Dendritic cell treated with granulocyte-macrophage colony-stimulating factor and Interleukin-4, amounts not matched to agents 40 ng/mL and 50 ng/mL, for 4 days (primary cell): ENCODE measurements at regions of chr17 and their contacts with region 1.

Region 1: DNA sequence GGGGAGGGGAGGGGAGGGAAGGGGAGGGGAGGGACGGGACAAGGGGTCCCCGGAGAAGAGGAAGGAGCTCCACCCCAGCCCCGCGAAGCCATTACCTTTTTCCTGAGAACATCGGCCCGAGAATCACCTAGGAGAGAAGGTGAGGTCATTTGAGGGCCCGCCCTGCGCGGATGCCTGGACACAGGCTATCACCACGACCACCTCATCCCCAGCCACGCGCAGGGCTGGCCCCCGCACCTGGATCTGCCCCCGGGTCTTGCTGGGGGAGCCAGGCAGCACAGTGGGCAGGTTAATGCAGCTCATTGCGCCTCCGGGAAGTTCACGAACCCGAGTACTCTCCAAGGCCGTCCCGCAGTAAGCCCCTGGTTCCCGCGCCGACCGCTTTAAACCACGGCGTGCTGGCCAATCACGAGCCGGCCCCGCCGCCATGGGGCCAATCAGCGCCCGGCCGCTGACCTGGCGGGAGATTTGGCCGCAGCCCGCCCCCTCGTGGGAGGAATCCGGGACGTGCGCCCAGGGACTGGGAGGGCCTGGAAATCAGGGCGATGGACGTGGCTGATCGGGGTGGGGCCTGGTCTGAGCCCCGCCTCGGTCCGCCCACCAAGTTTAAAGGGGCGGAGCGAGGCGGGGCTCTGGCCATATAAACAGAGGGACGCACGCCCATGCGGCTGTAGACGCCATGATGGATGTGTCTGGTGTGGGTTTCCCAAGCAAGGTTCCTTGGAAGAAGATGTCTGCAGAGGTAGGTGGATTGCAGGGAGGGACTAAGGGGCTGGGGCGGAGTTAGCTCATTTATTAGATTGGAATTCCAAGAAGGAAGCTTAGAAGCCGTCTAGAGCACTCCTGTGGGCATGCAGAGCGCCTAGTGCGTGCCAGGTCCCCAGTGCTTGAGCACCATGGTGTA is at the starts of genes AFMID and TK1:
- H3K4me3 Mint-ChIP-seq: peak within 1 kb of the TSS; percentile 73
- H3K27ac Mint-ChIP-seq: peak within 1 kb of the TSS; percentile 78
- H3K4me1 Mint-ChIP-seq: peaks cover 51% of the 10 kb centered on the region
- H3K27me3 Mint-ChIP-seq: no peaks in the 10 kb centered on the region

Region 2: DNA sequence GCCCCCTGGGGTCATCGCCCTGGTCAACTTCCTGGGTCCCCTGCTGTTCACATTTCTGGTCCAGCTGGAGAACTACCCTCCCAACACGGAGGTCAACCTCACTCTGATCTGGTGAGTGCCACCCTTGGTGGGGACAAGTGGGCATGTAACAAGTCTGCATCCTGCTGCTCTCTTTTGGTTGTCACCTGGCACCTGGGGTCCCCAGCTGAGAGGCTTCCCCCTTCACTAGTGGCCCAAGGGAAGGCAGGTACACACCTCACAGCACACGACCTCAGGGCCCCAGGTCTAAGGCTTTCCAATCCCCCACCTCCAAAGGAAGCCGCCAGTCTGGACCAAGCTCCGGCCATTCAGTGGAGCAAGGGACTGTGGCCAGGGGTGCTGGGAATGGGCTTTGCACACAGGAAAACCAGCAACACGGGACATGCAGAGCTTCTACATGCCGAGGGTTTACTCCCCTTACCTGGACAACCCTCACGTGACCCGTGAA is 52.0 kb before region 1 on chr17:
- intact Hi-C with region 1: no loop called
- H3K4me3 Mint-ChIP-seq: no peak overlapping the region
- H3K27ac Mint-ChIP-seq: peak overlapping the region; percentile 22
- H3K4me1 Mint-ChIP-seq: peaks cover 87% of the 10 kb centered on the region
- H3K27me3 Mint-ChIP-seq: peaks cover 3% of the 10 kb centered on the region

Region 3: DNA sequence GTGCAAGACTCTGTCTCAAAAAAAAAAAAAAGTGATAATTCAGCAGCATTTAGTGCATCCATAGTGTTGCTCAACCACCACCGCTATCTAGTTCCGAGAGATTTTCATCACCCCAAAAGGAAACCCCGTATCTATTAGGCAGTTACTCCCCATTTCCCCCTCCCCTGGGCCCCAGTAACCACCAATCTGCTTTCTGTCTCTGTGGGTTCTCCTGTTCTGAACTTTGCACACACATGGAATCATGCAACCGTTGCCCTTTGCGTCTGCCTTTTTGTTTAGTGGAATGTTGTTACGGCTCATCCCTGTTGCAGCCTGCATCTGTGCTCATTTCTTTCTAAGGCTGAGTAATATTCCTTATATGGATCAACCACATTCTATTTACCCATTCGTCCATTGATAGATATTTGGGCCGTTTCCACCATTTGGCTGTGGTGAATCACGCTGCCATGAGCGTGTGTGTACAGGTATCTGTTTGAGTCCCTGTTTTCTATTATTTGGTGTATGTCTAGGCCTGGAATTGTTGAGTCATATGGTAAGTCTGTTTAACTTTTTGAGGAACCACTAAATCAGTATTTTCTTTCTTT is 27.3 kb before region 1 on chr17:
- intact Hi-C with region 1: no loop called
- H3K4me3 Mint-ChIP-seq: no peak overlapping the region
- H3K27ac Mint-ChIP-seq: peak overlapping the region; percentile 23
- H3K4me1 Mint-ChIP-seq: peaks cover 33% of the 10 kb centered on the region
- H3K27me3 Mint-ChIP-seq: peaks cover 2% of the 10 kb centered on the region

Region 4: GRCh38 chr17:78197147-78197832 is 10.3 kb after region 1 on chr17:
- intact Hi-C with region 1: loop called (anchors 1 kb)
- H3K4me3 Mint-ChIP-seq: no peak overlapping the region
- H3K27ac Mint-ChIP-seq: peak overlapping the region; percentile 90
- H3K4me1 Mint-ChIP-seq: peaks cover 32% of the 10 kb centered on the region
- H3K27me3 Mint-ChIP-seq: no peaks in the 10 kb centered on the region

Region 5: GRCh38 chr17:78231991-78232858 is 45.3 kb after region 1 on chr17:
- intact Hi-C with region 1: no loop called
- H3K4me3 Mint-ChIP-seq: no peak overlapping the region
- H3K27ac Mint-ChIP-seq: no peak overlapping the region
- H3K4me1 Mint-ChIP-seq: peaks cover 22% of the 10 kb centered on the region
- H3K27me3 Mint-ChIP-seq: peaks cover 71% of the 10 kb centered on the region